ENCODE measurements at regions of chr10 and their contacts with region 1.

Region 1: GRCh38 chr10:27742195-27743011 is 3.2 kb downstream of the MKX start:
- DNase-seq: peak; percentile 69
- H3K4me3 ChIP-seq: peak overlapping the region; percentile 61
- CTCF ChIP-seq: peak; percentile 82

Region 2: DNA sequence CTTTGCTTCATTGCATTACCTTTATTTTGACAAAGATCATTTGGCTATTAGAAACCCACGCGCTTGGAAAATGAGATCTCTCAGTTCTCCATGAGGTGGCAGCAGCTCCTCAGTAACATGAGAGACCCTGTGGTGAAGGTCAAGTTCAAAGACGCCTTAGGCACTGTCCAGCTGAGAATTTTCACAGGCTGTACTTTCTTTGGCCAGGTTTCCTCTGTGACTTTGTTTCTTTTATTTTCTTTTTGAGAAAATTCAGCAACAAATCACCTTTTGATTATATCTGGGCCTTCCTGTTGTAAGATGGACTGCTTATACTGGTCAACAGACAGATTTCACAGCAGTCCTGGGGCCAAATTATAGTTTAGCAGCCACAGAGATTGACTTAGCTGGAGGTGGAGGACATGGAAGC is 183.8 kb before region 1 on chr10:
- CTCF ChIA-PET with region 1: interaction called, 15 read pairs
- POLR2A ChIA-PET with region 1: no interaction called
- DNase-seq: peak; percentile 10
- H3K4me3 ChIP-seq: no peak overlapping the region
- CTCF ChIP-seq: peak; percentile 71

Region 3: DNA sequence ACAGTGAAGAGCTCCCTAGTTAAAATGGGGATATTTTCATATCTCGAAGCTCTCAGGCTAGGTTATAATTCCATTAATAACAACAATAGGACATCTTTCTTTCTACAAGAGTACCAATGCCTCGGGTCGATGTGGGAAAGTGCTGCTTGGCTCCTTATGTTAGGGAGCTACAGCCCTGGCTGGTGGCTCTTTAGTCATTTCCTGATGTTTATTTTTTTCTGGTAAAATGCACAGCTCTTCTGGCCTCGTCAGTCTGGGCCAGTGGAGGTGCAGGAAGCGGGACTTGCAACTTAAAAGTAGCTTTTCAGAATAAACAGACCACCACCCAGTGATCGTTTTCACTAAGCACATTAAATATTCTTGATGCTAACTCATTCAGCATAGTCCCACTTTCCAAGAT is 55.1 kb before region 1 on chr10:
- CTCF ChIA-PET with region 1: no interaction called
- POLR2A ChIA-PET with region 1: no interaction called
- DNase-seq: no peak
- H3K4me3 ChIP-seq: no peak overlapping the region
- CTCF ChIP-seq: no peak

Region 4: GRCh38 chr10:27723436-27723835 is 19.0 kb before region 1 on chr10:
- CTCF ChIA-PET with region 1: interaction called, 14 read pairs
- POLR2A ChIA-PET with region 1: interaction called, 6 read pairs
- DNase-seq: peak; percentile 73
- H3K4me3 ChIP-seq: no peak overlapping the region
- CTCF ChIP-seq: no peak

Region 5: DNA sequence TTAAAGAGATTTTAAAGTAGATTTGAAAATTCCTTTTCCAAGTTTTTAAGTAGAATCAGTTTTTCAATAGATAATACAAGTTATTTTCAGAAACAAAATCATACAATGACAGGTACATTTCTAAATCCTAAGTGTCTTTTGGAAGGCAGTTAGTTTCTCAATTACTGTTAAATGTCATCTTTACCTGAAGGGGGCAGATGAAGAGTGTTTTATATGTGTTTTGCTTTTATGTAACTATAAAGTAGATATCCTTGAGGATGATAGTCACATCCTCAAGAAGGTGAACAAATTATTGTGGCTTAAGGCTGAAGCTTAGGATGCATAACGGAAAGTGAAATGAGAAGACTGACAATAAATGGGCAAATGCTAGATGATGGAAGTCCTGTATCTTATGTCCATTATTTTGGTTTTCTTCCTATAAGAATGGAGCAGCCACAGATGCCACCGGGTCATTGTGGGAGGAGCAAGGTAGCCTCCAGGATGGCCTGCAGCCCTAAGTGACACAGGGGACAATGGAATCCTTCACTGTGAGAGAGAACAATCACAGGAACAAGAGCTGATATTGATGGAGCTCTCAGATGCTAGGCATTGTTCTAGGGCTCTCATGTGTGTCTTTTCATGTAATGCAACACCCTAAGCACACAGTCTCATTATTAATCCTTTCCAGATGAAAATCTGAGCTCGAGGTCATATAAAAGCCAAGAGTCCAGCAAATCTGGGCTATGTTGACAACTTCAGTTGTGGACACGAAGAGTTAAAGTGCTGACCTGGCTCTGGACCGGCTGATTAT is 17.3 kb after region 1 on chr10:
- CTCF ChIA-PET with region 1: interaction called, 13 read pairs
- POLR2A ChIA-PET with region 1: no interaction called
- DNase-seq: no peak
- H3K4me3 ChIP-seq: no peak overlapping the region
- CTCF ChIP-seq: no peak

Region 6: DNA sequence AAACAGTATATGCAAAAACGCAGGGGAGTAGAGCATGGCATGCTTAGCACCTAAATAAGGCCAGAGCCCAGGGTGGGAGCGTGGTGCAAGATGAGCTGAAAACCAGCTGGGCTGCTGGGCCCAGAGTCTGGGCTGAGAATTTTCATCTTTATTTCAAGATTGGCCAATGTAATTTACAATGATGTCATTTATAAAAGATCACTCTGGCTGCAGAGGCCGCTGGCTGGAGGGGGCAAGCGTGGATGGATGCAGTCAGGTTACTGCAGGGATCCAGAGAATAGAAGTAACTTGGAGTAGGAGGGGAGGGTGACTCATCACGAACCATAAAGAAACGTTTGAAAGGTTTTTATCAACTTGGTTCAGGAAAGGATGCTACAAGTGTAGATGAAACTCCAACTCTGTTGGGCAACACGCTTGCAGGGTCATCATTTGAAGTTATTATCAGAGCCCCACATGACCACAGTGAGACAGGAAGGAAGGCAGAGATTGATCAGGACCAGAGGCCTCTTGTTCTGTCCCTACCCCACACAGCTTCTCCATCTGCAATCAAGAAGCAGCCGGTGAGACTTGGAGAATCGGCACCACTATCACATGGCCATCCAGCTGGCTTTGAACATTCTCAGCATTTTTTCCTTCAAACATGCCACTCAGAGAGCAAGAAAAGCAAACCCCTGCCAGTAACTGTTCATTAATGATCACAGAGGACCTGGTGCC is 207.3 kb after region 1 on chr10:
- CTCF ChIA-PET with region 1: no interaction called
- POLR2A ChIA-PET with region 1: no interaction called
- DNase-seq: no peak
- H3K4me3 ChIP-seq: no peak overlapping the region
- CTCF ChIP-seq: no peak

Region 7: GRCh38 chr10:28179006-28179742 is 436.8 kb after region 1 on chr10:
- CTCF ChIA-PET with region 1: interaction called, 27 read pairs
- POLR2A ChIA-PET with region 1: no interaction called
- DNase-seq: no peak
- H3K4me3 ChIP-seq: no peak overlapping the region
- CTCF ChIP-seq: peak; percentile 30

Region 8: DNA sequence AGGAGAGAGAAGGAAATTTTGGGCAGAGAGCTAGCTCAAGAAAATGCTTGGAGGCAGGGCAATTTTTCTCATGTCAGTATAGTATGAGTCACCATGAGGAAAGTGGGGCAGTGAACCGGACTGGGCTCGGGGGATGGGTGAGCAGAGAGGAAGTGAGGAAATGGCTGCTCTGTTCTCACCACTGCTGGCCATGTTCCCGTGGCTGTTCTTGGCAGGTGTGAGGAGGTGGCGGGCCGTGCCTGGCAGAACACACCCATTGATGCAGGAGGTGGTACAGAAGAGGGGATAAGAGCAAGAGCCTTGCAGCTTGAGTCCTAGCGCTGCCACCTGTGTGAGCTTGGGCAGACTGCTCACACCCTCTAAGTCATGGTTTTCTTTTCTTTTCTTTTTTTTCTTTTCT is 1242.0 kb after region 1 on chr10:
- CTCF ChIA-PET with region 1: no interaction called
- POLR2A ChIA-PET with region 1: no interaction called
- DNase-seq: peak; percentile 19
- H3K4me3 ChIP-seq: no peak overlapping the region
- CTCF ChIP-seq: no peak

Measured in AG04449 (cell line).